ENCODE measurements at regions of chr6 and their contacts with region 1.

Region 1: DNA sequence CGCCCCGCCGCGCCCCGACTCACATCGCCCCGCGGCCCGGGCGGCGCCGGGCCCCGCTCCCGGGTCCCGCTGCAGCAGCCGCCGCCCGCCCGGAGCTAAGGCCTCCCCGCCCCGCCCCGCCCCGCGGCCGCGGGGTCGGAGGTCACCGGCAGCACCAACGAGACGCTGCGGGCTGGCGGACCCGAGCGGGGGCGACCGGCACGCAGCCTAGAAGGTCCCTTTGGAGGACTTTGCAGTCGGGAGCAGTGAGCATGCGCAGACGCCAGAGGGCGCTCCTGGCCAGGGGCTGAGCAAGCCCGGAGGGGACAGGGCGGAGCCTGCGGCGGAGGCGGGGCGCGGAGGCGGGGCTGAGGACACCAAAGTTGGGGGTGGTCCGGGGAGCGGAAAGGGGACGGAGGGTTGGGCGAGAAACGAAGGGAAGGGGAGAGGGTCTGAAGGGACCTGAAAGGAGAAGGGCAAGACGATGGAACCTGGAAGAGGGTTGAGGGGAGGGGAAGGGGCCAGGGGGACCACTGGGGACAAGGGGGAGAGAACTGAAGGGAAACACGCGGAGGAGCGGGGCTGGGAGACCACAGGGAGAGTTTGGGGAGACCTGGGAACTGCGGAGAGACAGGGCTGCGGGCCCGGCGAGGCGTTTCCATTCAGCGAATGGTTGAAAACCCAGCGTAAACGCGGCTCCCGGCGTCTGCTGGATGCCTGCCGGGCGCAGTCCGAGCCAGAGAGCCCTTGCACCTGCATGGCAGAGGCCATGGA is at the start of gene FRS3:
- DNase-seq: peak; percentile 96
- H3K4me3 ChIP-seq: peak within 1 kb of the TSS; percentile 81
- H3K27ac ChIP-seq: peak within 1 kb of the TSS; percentile 53
- H3K4me1 ChIP-seq: peaks cover 17% of the 10 kb centered on the region
- H3K27me3 ChIP-seq: no peaks in the 10 kb centered on the region
- CTCF ChIP-seq: peak; percentile 95
- total RNA-seq, gene FRS3: 3.0 and 5.5 TPM in 2 replicates

Region 2: GRCh38 chr6:41367700-41368099 is 412.3 kb before region 1 on chr6:
- CTCF ChIA-PET with region 1: interaction called, 5 read pairs
- POLR2A ChIA-PET with region 1: no interaction called
- intact Hi-C with region 1: loop called (anchors 1 kb)
- DNase-seq: peak; percentile 77
- H3K4me3 ChIP-seq: no peak overlapping the region
- H3K27ac ChIP-seq: no peak overlapping the region
- H3K4me1 ChIP-seq: peaks cover 11% of the 10 kb centered on the region
- H3K27me3 ChIP-seq: no peaks in the 10 kb centered on the region
- CTCF ChIP-seq: peak; percentile 82

Region 3: GRCh38 chr6:41568585-41569384 is 211.2 kb before region 1 on chr6:
- CTCF ChIA-PET with region 1: no interaction called
- POLR2A ChIA-PET with region 1: no interaction called
- intact Hi-C with region 1: no loop called
- DNase-seq: no peak
- H3K4me3 ChIP-seq: no peak overlapping the region
- H3K27ac ChIP-seq: no peak overlapping the region
- H3K4me1 ChIP-seq: peaks cover 29% of the 10 kb centered on the region
- H3K27me3 ChIP-seq: no peaks in the 10 kb centered on the region
- CTCF ChIP-seq: no peak

Region 4: DNA sequence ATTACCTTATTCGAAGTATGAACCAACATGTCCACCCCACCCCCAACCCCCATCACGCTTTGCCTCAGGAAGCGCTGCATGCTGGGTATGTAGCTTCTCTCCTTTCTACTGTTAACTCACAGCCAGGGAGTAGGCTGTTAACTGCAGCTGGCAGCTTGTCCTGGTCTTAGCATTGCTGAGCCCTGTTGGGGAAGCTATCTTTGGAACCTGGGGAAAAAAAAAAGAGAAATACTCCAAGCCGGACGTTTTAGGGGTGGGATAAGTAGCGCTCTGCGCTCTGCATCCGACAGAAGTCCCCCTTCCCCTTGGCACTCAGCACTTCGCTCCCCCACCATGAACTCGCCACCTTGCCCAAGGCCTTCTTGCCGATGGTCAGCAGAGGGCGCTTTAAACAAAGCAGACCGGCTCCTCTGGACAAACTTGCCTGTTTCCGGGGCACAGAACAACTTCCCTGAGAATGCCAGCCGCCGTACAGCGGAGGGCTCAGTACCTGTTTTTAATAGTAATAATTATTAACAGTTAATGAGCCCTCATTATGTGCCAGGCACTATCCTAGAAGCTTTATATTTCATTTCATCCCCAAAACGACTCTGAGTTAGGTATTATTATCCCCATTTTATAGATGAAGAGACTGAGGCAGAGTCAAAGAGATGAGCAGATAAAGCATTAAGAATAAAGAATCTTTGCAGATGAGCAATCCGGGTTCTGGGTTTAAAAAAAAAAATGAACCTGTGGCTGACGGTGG is 176.9 kb before region 1 on chr6:
- CTCF ChIA-PET with region 1: no interaction called
- POLR2A ChIA-PET with region 1: no interaction called
- intact Hi-C with region 1: loop called (anchors 10 kb)
- DNase-seq: peak; percentile 93
- H3K4me3 ChIP-seq: peak overlapping the region; percentile 10
- H3K27ac ChIP-seq: peak overlapping the region; percentile 26
- H3K4me1 ChIP-seq: peaks cover 11% of the 10 kb centered on the region
- H3K27me3 ChIP-seq: no peaks in the 10 kb centered on the region
- CTCF ChIP-seq: peak; percentile 98

Region 5: DNA sequence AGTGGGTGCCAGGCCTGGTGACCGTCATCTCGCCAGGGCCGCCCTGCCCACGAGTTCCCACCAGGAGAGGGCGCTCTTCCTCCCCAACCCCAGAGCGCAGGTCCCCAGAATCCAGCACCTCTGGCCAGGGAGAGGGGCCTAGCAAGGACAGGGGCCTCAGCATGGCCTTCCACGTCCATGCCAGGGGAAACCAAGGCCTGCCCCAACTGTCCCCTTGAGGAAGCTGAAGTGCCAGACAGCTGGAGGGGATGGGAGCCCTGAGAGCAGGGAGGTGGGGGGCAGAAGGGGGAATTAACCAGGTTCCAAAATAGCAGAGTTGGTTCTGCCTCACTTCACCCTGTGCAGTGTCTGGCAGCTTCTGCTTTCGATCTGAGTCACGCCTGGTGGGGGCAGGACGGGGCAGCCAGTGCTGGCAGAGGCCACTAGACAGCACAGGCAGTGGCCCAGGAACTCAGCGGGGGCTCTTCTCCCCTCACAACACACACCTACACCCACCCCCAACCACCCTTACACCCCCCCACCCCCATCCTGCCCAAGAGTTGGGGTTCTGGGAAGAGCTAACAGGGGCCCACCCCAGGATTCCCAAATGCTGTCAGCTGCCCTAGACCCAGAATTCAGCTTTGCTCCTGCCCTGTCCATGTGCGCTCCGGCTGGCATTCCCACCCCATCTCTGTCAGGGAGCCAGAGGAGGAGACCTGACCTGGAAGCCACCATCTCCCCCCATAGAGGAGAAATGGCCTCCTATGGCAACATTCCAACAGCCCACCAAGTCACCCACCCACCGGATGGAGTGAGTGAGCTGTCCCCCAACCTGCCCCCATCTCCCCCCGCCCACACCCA is 73.8 kb before region 1 on chr6:
- CTCF ChIA-PET with region 1: interaction called, 4 read pairs
- POLR2A ChIA-PET with region 1: no interaction called
- intact Hi-C with region 1: loop called (anchors 10 kb)
- DNase-seq: peak; percentile 45
- H3K4me3 ChIP-seq: no peak overlapping the region
- H3K27ac ChIP-seq: peak overlapping the region; percentile 37
- H3K4me1 ChIP-seq: peaks cover 6% of the 10 kb centered on the region
- H3K27me3 ChIP-seq: no peaks in the 10 kb centered on the region
- CTCF ChIP-seq: peak; percentile 79

Region 6: GRCh38 chr6:42059743-42060142 is 279.8 kb after region 1 on chr6:
- CTCF ChIA-PET with region 1: no interaction called
- POLR2A ChIA-PET with region 1: no interaction called
- intact Hi-C with region 1: no loop called
- DNase-seq: no peak
- H3K4me3 ChIP-seq: no peak overlapping the region
- H3K27ac ChIP-seq: no peak overlapping the region
- H3K4me1 ChIP-seq: no peaks in the 10 kb centered on the region
- H3K27me3 ChIP-seq: no peaks in the 10 kb centered on the region
- CTCF ChIP-seq: no peak

Region 7: GRCh38 chr6:42166444-42167141 is 386.6 kb after region 1 on chr6:
- CTCF ChIA-PET with region 1: no interaction called
- POLR2A ChIA-PET with region 1: no interaction called
- intact Hi-C with region 1: loop called (anchors 2 kb)
- DNase-seq: peak; percentile 86
- H3K4me3 ChIP-seq: no peak overlapping the region
- H3K27ac ChIP-seq: no peak overlapping the region
- H3K4me1 ChIP-seq: no peaks in the 10 kb centered on the region
- H3K27me3 ChIP-seq: no peaks in the 10 kb centered on the region
- CTCF ChIP-seq: peak; percentile 90

Region 8: GRCh38 chr6:42217519-42218367 is 437.8 kb after region 1 on chr6 and contains the start of gene MRPS10:
- CTCF ChIA-PET with region 1: no interaction called
- POLR2A ChIA-PET with region 1: no interaction called
- intact Hi-C with region 1: loop called (anchors 1 kb)
- DNase-seq: peak; percentile 97
- H3K4me3 ChIP-seq: peak within 1 kb of the TSS; percentile 98
- H3K27ac ChIP-seq: peak within 1 kb of the TSS; percentile 90
- H3K4me1 ChIP-seq: peaks cover 13% of the 10 kb centered on the region
- H3K27me3 ChIP-seq: no peaks in the 10 kb centered on the region
- CTCF ChIP-seq: no peak
- total RNA-seq, gene MRPS10: 50.0 and 52.0 TPM in 2 replicates

Measured in A673 (cell line).